A673 (cell line): ENCODE measurements at regions of chr13 and their contacts with region 1.

Region 1: GRCh38 chr13:62357887-62358645 is 942.4 kb upstream of the PCDH20 start:
- DNase-seq: peak; percentile 77
- H3K4me3 ChIP-seq: no peak overlapping the region
- H3K27ac ChIP-seq: no peak overlapping the region
- H3K4me1 ChIP-seq: peaks cover 9% of the 10 kb centered on the region
- H3K27me3 ChIP-seq: no peaks in the 10 kb centered on the region
- CTCF ChIP-seq: peak; percentile 76

Region 2: GRCh38 chr13:62014299-62014698 is 343.8 kb before region 1 on chr13:
- CTCF ChIA-PET with region 1: no interaction called
- POLR2A ChIA-PET with region 1: no interaction called
- intact Hi-C with region 1: loop called (anchors 5 kb)
- DNase-seq: peak; percentile 64
- H3K4me3 ChIP-seq: no peak overlapping the region
- H3K27ac ChIP-seq: no peak overlapping the region
- H3K4me1 ChIP-seq: no peaks in the 10 kb centered on the region
- H3K27me3 ChIP-seq: no peaks in the 10 kb centered on the region
- CTCF ChIP-seq: peak; percentile 59

Region 3: GRCh38 chr13:62119739-62120700 is 238.0 kb before region 1 on chr13:
- CTCF ChIA-PET with region 1: no interaction called
- POLR2A ChIA-PET with region 1: no interaction called
- intact Hi-C with region 1: loop called (anchors 1 kb)
- DNase-seq: peak; percentile 56
- H3K4me3 ChIP-seq: no peak overlapping the region
- H3K27ac ChIP-seq: no peak overlapping the region
- H3K4me1 ChIP-seq: no peaks in the 10 kb centered on the region
- H3K27me3 ChIP-seq: no peaks in the 10 kb centered on the region
- CTCF ChIP-seq: peak; percentile 56